Naive thymus-derived CD8-positive, alpha-beta T cell (primary cell): ENCODE measurements at regions of chr6 and their contacts with region 1.

Region 1: GRCh38 chr6:43222418-43223059 is 6.7 kb downstream of the DNPH1 start:
- DNase-seq: no peak
- ATAC-seq: no peak
- H3K4me3 Mint-ChIP-seq: peak overlapping the region in 1 of 10 donors; percentile 65
- H3K27ac Mint-ChIP-seq: peak overlapping the region; percentile 89 to 100 (median 100)
- H3K4me1 Mint-ChIP-seq: peaks cover 26 to 53% (median 48%) of the 10 kb centered on the region in 4 donors
- H3K27me3 Mint-ChIP-seq: no peaks in the 10 kb centered on the region

Region 2: DNA sequence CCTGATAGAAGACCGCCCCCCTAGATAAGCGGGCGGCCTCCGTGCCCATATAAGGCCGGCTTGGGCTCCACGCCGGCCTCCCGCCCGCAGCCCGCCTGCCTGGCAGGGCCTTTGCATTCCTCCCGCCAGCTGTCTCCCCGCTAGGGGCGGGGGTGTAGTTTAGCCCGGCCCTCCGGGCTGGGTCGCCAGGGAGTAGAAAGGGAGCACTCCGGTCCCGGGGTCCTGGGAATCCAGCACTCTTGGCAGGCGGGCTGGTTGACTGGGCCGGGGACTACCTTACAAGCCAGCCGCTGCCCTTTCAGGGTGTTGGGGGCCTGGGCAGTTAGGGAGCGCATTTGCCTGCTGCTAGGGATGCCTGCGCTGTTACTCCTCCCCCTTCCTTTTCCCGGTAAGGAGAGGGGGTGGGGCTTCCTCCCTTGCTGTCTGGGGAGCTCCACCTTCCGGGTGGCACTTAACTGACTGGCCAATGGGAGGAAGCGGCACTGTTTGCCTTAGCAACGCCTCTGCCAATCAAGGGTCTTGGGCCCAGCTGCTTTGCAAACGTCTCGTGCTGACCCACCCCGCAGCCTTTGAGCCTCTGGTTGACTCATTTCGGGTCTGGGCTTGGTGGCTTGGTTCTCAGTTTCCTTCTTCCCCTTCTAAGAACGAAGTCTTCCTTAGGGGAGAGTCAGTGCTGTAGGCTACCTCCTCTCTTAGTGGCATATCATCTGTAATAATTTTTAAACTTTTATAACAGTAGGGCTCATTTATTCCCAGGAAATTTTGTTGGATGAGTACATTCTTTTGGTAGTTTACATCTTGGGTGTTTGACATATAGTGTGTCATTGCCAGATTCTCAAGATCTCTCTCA is 48.1 kb before region 1 on chr6:
- POLR2A ChIA-PET with region 1: interaction called, 33 read pairs
- DNase-seq: peak; percentile 70 to 97 (median 88)
- ATAC-seq: peak; percentile 58 to 59
- H3K4me3 Mint-ChIP-seq: peak overlapping the region; percentile 69 to 98 (median 94)
- H3K27ac Mint-ChIP-seq: peak overlapping the region; percentile 87 to 99 (median 96)
- H3K4me1 Mint-ChIP-seq: peaks cover 24 to 58% (median 48%) of the 10 kb centered on the region in 4 donors
- H3K27me3 Mint-ChIP-seq: peaks cover 0 to 2% (median 0%) of the 10 kb centered on the region in 5 donors